MCF 10A (cell line): ENCODE measurements at regions of chr5 and their contacts with region 1.

Region 1: DNA sequence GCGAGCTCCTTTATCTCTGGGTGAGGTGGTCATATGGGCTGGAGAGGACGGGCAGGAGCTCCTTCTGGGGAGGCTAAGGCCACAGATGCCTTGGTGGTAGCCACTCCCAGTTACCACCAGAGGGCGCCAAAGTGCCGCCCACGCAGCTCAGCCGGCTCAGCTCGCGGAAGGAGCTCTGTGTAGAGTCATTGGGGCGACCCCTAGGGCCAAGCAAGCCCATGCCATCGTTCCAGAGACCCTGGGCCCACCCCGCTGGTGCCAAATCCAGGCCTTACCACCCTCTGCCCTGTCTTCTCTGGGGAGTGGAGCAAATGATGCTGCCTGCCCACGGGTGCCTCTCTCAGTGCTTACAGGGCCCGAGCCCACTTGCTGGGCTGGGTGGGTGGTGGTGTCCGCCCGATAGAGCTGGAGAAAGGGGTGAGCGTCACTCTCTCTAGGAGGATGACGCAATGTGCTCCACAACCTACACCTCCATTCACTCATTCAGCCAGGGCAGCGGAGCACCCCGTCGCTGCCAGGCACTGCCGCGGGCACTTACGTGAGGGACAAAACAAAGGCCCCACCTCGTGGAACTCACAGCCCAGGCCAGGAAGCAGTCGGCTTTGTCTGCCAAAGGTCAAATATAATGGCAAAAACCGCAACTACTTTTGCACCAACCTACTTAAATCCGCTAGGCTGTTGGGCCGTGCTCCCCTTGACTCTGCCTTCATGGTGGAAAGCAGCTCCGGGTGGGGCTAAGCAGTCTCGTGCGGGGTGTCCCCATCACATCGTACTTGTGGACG is 13.8 kb downstream of the TSPAN17 start:
- DNase-seq: peak; percentile 81
- H3K4me3 Mint-ChIP-seq: no peak overlapping the region
- H3K27ac Mint-ChIP-seq: no peak overlapping the region
- H3K4me1 Mint-ChIP-seq: no peaks in the 10 kb centered on the region
- H3K27me3 Mint-ChIP-seq: peaks cover 17% of the 10 kb centered on the region
- CTCF ChIP-seq: peak; percentile 99

Region 2: GRCh38 chr5:176507911-176508310 is 153.1 kb before region 1 on chr5:
- CTCF ChIA-PET with region 1: no interaction called
- POLR2A ChIA-PET with region 1: no interaction called
- intact Hi-C with region 1: no loop called
- DNase-seq: no peak
- H3K4me3 Mint-ChIP-seq: no peak overlapping the region
- H3K27ac Mint-ChIP-seq: no peak overlapping the region
- H3K4me1 Mint-ChIP-seq: no peaks in the 10 kb centered on the region
- H3K27me3 Mint-ChIP-seq: no peaks in the 10 kb centered on the region
- CTCF ChIP-seq: no peak

Region 3: DNA sequence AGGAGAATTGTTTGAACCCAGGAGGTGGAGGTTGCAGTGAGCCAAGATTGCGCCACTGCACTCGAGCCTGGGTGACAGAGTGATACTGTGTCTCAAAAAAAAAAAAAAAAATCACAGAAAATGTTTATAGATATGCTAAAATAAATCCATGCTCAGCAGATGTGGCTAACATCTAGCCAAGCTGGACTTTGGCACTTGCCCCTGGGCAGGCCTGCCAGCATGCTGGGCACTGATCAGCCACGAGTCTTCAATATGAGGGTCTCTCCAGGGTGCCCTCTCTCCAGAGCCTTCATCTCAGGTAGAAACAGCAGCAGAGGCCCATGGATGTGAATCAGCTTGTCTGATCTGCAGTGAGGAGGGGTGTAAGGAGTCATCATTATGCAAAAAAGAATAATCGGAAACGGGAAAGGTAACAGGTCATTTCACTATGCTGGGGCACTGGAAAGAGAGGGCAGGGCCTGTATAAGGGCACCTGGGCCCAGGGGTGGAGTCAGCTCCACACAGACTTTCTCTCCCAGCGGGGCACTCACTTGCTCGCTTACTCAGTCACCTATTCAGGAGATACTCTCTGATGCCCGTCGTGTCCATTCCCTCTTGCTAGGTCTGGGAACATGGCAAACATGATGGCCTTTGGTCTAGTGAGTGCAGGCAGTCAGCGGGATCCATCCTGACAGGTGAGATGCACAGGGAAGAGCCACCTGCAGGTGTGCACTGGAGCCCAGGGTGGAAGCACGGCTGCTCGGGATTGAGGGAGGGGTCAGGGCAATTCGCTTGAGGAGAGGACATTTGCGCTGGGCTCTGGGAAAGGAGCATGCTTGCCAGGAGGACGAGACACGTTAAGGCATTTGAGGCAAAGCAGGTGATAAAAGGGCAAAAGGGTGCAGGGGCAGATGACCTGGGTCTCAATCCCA is 141.0 kb before region 1 on chr5:
- CTCF ChIA-PET with region 1: no interaction called
- POLR2A ChIA-PET with region 1: no interaction called
- intact Hi-C with region 1: no loop called
- DNase-seq: no peak
- H3K4me3 Mint-ChIP-seq: no peak overlapping the region
- H3K27ac Mint-ChIP-seq: peak overlapping the region; percentile 7
- H3K4me1 Mint-ChIP-seq: peaks cover 12% of the 10 kb centered on the region
- H3K27me3 Mint-ChIP-seq: no peaks in the 10 kb centered on the region
- CTCF ChIP-seq: no peak

Region 4: DNA sequence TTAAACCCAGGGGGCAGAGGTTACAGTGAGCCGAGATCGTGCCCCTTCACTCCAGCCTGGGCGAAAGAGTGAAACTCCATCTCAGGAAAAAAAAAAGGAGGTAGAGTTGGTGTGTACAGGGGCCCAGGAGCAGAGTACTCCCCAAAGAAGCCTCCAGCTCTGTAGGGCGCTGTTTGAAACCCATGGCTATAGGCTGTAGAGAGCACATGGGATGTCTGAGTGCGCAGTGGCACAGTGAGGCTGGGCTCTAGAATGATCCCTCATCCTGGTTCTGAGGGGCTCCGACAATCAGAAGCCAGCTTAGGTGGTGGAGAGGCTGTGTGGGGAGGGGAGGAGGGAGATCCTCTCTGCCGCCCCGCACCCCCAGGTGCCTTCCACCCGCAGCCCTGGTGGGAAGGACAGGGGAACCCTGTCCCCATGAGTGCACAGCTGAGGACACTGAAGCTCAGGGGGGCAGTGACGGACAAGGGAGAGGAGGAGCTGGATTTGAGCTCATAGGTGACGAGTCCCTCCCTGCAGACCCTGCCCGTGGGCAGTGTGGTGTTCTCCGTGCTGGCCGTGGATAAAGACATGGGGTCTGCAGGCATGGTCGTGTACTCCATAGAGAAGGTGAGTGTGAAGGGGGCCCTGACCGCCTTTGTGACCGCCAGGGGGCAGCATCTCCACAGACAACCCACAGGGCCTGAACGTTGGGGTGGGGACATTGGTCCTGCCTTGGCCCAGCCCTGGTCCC is 87.3 kb before region 1 on chr5:
- CTCF ChIA-PET with region 1: interaction called, 42 read pairs
- POLR2A ChIA-PET with region 1: no interaction called
- intact Hi-C with region 1: no loop called
- DNase-seq: peak; percentile 77
- H3K4me3 Mint-ChIP-seq: no peak overlapping the region
- H3K27ac Mint-ChIP-seq: no peak overlapping the region
- H3K4me1 Mint-ChIP-seq: peaks cover 14% of the 10 kb centered on the region
- H3K27me3 Mint-ChIP-seq: peaks cover 18% of the 10 kb centered on the region
- CTCF ChIP-seq: peak; percentile 94

Region 5: DNA sequence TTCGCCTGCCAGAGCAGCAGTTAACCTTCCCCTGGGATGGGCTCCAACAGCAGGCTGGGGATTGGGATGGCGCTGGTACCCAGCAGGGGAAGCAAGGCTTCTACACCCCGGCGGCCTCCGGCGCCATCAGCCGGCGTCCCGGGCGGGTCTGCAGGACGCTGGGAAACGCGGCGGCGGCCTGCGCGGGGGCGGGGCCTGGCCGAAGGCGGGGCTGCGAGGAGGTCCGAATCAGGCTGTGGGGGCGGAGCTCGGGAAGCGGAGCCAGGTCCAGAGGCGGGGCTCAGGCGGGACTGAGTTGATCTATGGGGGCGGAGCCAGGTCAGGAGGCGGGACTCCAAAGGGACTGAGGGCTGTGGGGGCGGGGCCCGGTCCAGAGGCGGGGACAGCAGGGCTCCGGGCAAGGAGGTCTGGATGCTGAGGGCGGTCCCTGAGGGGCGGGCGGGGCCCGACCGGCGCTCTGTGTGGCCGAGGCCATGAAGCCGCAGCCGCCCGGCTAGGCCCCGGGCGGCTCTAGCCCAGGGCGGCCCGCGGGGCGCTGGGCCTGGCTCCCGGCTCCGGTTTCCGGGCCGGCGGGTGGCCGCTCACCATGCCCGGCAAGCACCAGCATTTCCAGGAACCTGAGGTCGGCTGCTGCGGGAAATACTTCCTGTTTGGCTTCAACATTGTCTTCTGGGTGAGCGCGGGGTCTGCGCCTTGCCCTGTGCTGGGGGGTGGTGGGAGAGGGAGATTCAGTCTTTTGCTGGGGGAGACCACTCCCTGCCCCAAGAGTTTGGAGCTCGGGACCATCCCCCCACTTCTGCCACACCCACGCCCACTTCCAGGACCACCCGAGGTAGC is 13.8 kb before region 1 on chr5 and contains the start of gene TSPAN17:
- CTCF ChIA-PET with region 1: interaction called, 122 read pairs
- POLR2A ChIA-PET with region 1: interaction called, 4 read pairs
- intact Hi-C with region 1: no loop called
- DNase-seq: peak; percentile 100
- H3K4me3 Mint-ChIP-seq: peak within 1 kb of the TSS; percentile 80
- H3K27ac Mint-ChIP-seq: peak within 1 kb of the TSS; percentile 76
- H3K4me1 Mint-ChIP-seq: peaks cover 21% of the 10 kb centered on the region
- H3K27me3 Mint-ChIP-seq: no peaks in the 10 kb centered on the region
- CTCF ChIP-seq: peak; percentile 49
- total RNA-seq, gene TSPAN17: 36.7 and 47.5 TPM in 2 replicates

Region 6: GRCh38 chr5:176901260-176902101 is 240.4 kb after region 1 on chr5:
- CTCF ChIA-PET with region 1: interaction called, 36 read pairs
- POLR2A ChIA-PET with region 1: no interaction called
- intact Hi-C with region 1: no loop called
- DNase-seq: no peak
- H3K4me3 Mint-ChIP-seq: no peak overlapping the region
- H3K27ac Mint-ChIP-seq: no peak overlapping the region
- H3K4me1 Mint-ChIP-seq: no peaks in the 10 kb centered on the region
- H3K27me3 Mint-ChIP-seq: no peaks in the 10 kb centered on the region
- CTCF ChIP-seq: no peak

Region 7: GRCh38 chr5:176927562-176927961 is 266.5 kb after region 1 on chr5:
- CTCF ChIA-PET with region 1: interaction called, 26 read pairs
- POLR2A ChIA-PET with region 1: no interaction called
- intact Hi-C with region 1: no loop called
- DNase-seq: peak; percentile 13
- H3K4me3 Mint-ChIP-seq: no peak overlapping the region
- H3K27ac Mint-ChIP-seq: no peak overlapping the region
- H3K4me1 Mint-ChIP-seq: no peaks in the 10 kb centered on the region
- H3K27me3 Mint-ChIP-seq: no peaks in the 10 kb centered on the region
- CTCF ChIP-seq: no peak

Region 8: DNA sequence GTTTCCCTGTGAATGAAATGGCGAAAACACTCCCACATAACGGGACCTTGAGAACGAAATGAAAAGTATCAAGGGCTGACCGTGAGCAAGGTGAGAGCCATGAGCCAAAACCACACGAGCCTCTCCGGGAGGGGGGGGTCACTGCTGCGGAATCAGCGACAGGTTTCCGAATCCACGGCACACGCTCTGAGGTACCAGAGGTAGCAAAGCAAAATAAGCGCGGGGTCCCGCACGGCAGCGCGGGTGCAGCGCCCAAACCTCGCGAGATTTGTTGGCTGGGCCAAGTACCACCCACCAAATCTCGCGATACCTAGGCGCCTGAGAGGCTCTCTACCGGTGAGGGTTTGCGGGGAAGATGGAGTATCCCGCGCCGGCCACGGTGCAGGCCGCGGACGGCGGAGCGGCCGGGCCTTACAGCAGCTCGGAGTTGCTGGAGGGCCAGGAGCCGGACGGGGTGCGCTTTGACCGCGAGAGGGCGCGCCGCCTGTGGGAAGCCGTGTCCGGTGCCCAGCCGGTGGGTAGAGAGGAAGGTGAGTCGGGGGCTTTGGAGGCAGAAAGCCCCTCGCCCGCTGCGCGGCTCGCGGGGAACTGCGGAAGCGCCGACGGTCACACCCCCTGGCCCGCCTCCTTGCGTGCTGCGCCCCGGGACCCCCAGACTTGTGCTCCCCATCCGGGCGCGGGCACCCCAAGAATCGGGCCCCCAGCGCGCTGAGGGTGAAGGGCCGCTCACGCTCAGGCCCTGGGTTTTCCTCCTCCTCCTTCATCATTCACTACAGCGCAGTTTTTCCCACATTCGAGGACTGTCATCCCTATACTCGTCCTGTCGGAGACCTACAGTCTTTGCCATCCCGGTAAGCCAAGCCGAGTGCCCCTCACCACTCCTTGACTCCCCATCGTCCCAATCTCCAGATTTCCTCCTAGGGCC is 361.6 kb after region 1 on chr5 and contains the start of gene ZNF346:
- CTCF ChIA-PET with region 1: interaction called, 13 read pairs
- POLR2A ChIA-PET with region 1: no interaction called
- intact Hi-C with region 1: no loop called
- DNase-seq: peak; percentile 98
- H3K4me3 Mint-ChIP-seq: peak within 1 kb of the TSS; percentile 92
- H3K27ac Mint-ChIP-seq: peak within 1 kb of the TSS; percentile 98
- H3K4me1 Mint-ChIP-seq: peaks cover 29% of the 10 kb centered on the region
- H3K27me3 Mint-ChIP-seq: no peaks in the 10 kb centered on the region
- CTCF ChIP-seq: peak; percentile 46
- total RNA-seq, gene ZNF346: 32.5 and 36.6 TPM in 2 replicates